Left cardiac atrium (tissue), 4 donors: ENCODE measurements at regions of chr2 and their contacts with region 1.

Region 1: GRCh38 chr2:43611987-43612894 is 16.4 kb upstream of the THADA start:
- DNase-seq: peak; percentile 65
- ATAC-seq: peak; percentile 89 to 96

Region 2: GRCh38 chr2:43787895-43788294 is 175.7 kb after region 1 on chr2:
- intact Hi-C with region 1: loop called (anchors 10 kb)
- DNase-seq: no peak
- ATAC-seq: no peak

Region 3: DNA sequence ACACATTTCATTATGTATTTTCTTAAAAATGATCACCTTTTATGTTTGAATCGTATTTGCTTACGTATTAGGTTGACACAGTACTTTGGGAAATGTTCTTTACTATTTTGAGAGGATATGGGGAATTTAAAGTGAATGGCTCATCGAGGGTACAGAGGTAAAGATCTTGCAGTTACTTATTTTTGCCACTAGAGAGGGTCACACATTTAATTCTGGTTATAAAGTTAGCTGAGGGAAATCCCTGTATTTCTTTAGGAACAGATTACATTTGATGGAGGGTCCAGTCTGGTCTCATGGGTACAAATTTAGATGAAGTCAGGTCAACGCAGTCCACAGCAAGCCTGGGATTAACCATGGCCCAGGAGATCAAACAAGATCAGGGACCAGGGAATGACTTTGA is 186.1 kb after region 1 on chr2:
- intact Hi-C with region 1: loop called in 1 of 2 experiments (anchors 10 kb)
- DNase-seq: no peak
- ATAC-seq: no peak

Region 4: GRCh38 chr2:43890855-43891254 is 278.6 kb after region 1 on chr2:
- intact Hi-C with region 1: loop called (anchors 5 to 10 kb)
- DNase-seq: no peak
- ATAC-seq: no peak

Region 5: GRCh38 chr2:43898134-43898837 is 286.0 kb after region 1 on chr2:
- intact Hi-C with region 1: loop called (anchors 5 to 10 kb)
- DNase-seq: no peak
- ATAC-seq: peak in 1 of 2 donors; percentile 33